A549 (cell line): ENCODE measurements at regions of chr20 and their contacts with region 1.

Region 1: GRCh38 chr20:24619212-24619611 is 149.8 kb downstream of the SYNDIG1 start:
- DNase-seq: no peak
- ATAC-seq: no peak
- H3K4me3 ChIP-seq: no peak overlapping the region
- H3K27ac ChIP-seq: no peak overlapping the region
- H3K4me1 ChIP-seq: peaks cover 6% of the 10 kb centered on the region; the same call in 1 of the 3 replicates
- CTCF ChIP-seq: no peak
- EP300 ChIP-seq: no peak
- POLR2A ChIP-seq: no peak
- RAD21 ChIP-seq: no peak

Region 2: GRCh38 chr20:24469116-24469893 is 149.9 kb before region 1 on chr20 and contains the start of gene SYNDIG1:
- CTCF ChIA-PET with region 1: no interaction called
- POLR2A ChIA-PET with region 1: no interaction called
- DNase-seq: peak; percentile 17 to 25
- ATAC-seq: peak; percentile 70 to 78
- H3K4me3 ChIP-seq: peak within 1 kb of the TSS; percentile 59
- H3K27ac ChIP-seq: peak within 1 kb of the TSS; percentile 69 to 84
- H3K4me1 ChIP-seq: peaks cover 28% of the 10 kb centered on the region; the same call in 2 of the 3 replicates
- CTCF ChIP-seq: no peak
- EP300 ChIP-seq: no peak
- POLR2A ChIP-seq: no peak; the same call in 1 of the 2 replicates
- RAD21 ChIP-seq: no peak
- polyA plus RNA-seq, gene SYNDIG1: 0.96 and 1.1 TPM in 2 replicates

Region 3: DNA sequence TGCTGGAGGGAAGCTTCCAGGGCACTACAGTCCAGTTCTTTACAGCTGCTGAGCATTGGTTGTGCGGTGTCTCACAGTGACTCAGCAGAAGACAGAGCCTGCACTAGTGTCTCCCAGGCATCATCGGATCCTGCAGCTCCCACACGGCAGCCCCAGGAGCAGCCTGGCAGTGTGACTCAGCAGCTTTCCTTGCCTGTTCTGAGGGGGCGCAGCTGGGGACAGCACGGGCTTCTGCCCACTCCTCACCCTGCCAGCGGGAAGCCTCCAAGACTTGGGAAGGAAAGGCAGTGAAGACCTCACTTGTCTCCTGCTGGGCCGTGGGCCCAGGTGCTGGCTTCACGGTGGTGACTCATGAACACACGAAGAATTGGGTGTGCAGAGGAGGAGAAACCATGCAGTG is 15.6 kb after region 1 on chr20:
- CTCF ChIA-PET with region 1: interaction called, 13 read pairs
- POLR2A ChIA-PET with region 1: no interaction called
- DNase-seq: peak; percentile 91 to 94
- ATAC-seq: peak; percentile 98 to 99
- H3K4me3 ChIP-seq: no peak overlapping the region
- H3K27ac ChIP-seq: peak overlapping the region; percentile 90 to 92
- H3K4me1 ChIP-seq: peaks cover 22% of the 10 kb centered on the region
- CTCF ChIP-seq: no peak
- EP300 ChIP-seq: 0 out of 5 replicates have a peak, but pooled peaks of 1 of the 2 experiments have one; percentile 27
- POLR2A ChIP-seq: no peak
- RAD21 ChIP-seq: 0 out of 5 replicates have a peak, but pooled peaks of 1 of the 2 experiments have one; percentile 22